Heart left ventricle (tissue), 16 donors: ENCODE measurements at regions of chr16 and their contacts with region 1.

Region 1: GRCh38 chr16:69396187-69397061 is 10.6 kb upstream of the TERF2 start:
- DNase-seq: peak in 3 of 5 donors; percentile 61 to 76 (median 72)
- ATAC-seq: peak; percentile 29 to 55 (median 47)
- H3K4me3 ChIP-seq: no peak overlapping the region
- H3K27ac ChIP-seq: peak overlapping the region in 11 of 12 donors; percentile 47 to 86 (median 68)
- H3K4me1 ChIP-seq: peaks cover 0 to 34% (median 19%) of the 10 kb centered on the region in 12 donors
- H3K27me3 ChIP-seq: no peaks in the 10 kb centered on the region
- CTCF ChIP-seq: peak in 9 of 12 donors; percentile 54 to 83 (median 70)
- POLR2A ChIP-seq: no peak

Region 2: GRCh38 chr16:69482410-69482991 is 86.1 kb after region 1 on chr16:
- intact Hi-C with region 1: loop called in 3 of 10 experiments (anchors 2 to 5 kb)
- DNase-seq: peak; percentile 80 to 87 (median 83)
- ATAC-seq: peak; percentile 67 to 91 (median 82)
- H3K4me3 ChIP-seq: peak overlapping the region in 9 of 12 donors; percentile 3 to 42 (median 30)
- H3K27ac ChIP-seq: peak overlapping the region; percentile 68 to 94 (median 90)
- H3K4me1 ChIP-seq: peaks cover 0 to 29% (median 12%) of the 10 kb centered on the region in 12 donors
- H3K27me3 ChIP-seq: peaks cover 0 to 27% (median 0%) of the 10 kb centered on the region in 9 donors
- CTCF ChIP-seq: no peak
- POLR2A ChIP-seq: no peak

Region 3: GRCh38 chr16:69626256-69626655 is 229.8 kb after region 1 on chr16:
- intact Hi-C with region 1: loop called in 2 of 10 experiments (anchors 10 kb)
- DNase-seq: no peak
- ATAC-seq: peak in 1 of 4 donors; percentile 45
- H3K4me3 ChIP-seq: no peak overlapping the region
- H3K27ac ChIP-seq: no peak overlapping the region
- H3K4me1 ChIP-seq: peaks cover 0 to 8% (median 0%) of the 10 kb centered on the region in 12 donors
- H3K27me3 ChIP-seq: no peaks in the 10 kb centered on the region
- CTCF ChIP-seq: no peak
- POLR2A ChIP-seq: no peak

Region 4: DNA sequence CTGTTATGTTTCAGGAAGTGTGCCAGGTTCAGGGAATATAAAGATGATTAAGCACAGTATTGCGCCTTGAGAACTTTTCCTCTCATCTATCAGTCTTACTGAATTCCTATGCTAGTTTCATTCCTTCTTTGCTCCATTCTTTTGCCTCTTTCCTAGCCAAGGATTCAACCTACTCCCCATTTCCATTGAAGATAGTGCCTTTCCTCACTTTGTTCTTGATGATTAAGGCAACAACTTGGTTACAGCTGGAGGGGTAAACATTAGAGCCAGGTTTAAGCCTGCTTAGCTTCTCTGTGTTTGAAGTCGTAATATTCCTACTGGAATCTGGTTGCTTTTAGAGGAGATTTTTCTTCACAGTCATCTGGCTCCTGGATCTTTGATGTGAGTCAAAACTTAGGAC is 254.8 kb after region 1 on chr16:
- intact Hi-C with region 1: loop called in 4 of 10 experiments (anchors 10 kb)
- DNase-seq: no peak
- ATAC-seq: no peak
- H3K4me3 ChIP-seq: no peak overlapping the region
- H3K27ac ChIP-seq: no peak overlapping the region
- H3K4me1 ChIP-seq: no peaks in the 10 kb centered on the region
- H3K27me3 ChIP-seq: no peaks in the 10 kb centered on the region
- CTCF ChIP-seq: no peak
- POLR2A ChIP-seq: no peak

Region 5: GRCh38 chr16:69754469-69755310 is 358.3 kb after region 1 on chr16 and contains the start of gene NOB1:
- intact Hi-C with region 1: loop called in 9 of 10 experiments (anchors 2 to 10 kb)
- DNase-seq: peak; percentile 94 to 99 (median 97)
- ATAC-seq: peak; percentile 97 to 99 (median 98)
- H3K4me3 ChIP-seq: peak within 1 kb of the TSS; percentile 67 to 97 (median 82)
- H3K27ac ChIP-seq: peak within 1 kb of the TSS in 11 of 12 donors; percentile 43 to 82 (median 76)
- H3K4me1 ChIP-seq: peaks cover 0 to 25% (median 15%) of the 10 kb centered on the region in 12 donors
- H3K27me3 ChIP-seq: no peaks in the 10 kb centered on the region
- CTCF ChIP-seq: peak; percentile 96 to 100 (median 99)
- POLR2A ChIP-seq: peak in 1 of 2 donors; percentile 68
- total RNA-seq, gene NOB1: 10.9 to 26.0 (median 16.8) TPM